ENCODE measurements at regions of chr2 and their contacts with region 1.

Region 1: DNA sequence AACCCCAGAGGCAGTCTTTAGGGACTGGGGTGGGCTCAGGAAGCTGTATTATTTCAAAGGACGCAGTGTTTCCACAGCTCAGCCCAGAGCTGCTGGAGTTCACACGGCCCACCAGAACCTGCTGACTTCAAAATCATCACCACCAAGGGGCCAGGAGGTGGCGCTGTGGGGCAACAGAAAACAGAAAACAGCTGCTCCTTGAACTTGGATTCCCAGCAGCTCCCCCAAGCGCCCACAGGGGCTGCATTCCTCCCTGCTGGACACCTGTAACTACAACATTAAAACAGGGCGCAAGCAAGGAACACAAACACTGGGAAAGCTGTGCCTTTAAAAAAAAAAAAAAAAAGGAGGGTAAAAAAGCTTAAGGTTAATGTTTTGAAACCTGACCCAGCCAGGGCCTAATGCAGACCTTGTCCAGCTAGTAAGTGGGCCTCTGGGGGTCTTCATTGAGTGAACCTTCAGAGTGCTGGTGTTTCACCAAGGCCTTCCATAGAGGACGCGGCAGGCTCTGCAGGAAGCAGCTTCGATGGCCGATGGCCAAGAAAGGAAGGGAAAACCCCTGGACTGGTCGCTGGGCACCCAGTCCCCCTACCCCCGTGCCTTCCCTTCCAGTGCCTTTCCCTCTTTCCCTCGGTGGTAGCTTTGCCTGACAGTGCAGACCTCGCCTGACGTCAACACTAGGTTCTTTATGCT is 25.9 kb downstream of the MLPH start:
- DNase-seq: peak; percentile 85 to 89 (median 86)
- ATAC-seq: peak; percentile 38 to 73 (median 69)
- H3K4me3 ChIP-seq: no peak overlapping the region
- H3K27ac ChIP-seq: peak overlapping the region in 11 of 12 donors; percentile 60 to 96 (median 81)
- H3K4me1 ChIP-seq: peaks cover 0 to 60% (median 39%) of the 10 kb centered on the region in 12 donors
- H3K27me3 ChIP-seq: no peaks in the 10 kb centered on the region
- CTCF ChIP-seq: peak; percentile 76 to 94 (median 92)
- POLR2A ChIP-seq: no peak

Region 2: DNA sequence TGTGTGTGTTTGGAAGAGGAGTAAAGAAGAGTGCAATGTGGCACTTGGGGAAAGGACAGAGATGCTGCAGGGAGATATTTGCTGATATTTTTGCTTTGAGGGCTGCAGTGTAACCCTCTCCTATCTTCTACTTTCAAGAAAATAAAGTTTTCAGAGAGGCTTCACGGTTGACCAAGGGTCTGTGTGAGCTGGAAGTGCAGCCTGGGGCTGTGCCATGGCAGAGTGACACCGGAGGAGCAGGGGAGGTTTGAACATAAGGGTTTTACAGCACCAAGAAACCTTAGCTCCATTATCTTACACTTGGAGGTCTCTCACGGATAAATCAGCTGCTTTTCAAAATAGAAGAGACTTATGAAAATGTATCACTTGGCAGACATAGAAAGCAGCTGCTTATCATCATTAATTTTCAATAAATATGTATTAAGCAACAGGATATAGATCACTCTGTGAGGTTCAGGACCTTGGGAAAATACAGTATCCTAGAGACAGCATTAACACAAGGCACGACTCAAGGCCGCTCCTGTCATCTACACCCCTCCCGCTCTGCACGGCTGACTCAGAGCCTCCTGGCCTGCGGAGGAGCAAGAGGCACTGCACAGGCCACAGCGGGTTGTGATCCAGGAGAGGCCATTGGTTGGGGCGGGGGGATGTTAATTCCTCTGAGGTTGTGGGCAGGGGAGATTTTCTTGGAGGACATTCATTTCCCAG is 299.5 kb before region 1 on chr2:
- intact Hi-C with region 1: no loop called
- DNase-seq: peak in 3 of 5 donors; percentile 56 to 77 (median 71)
- ATAC-seq: peak in 3 of 4 donors; percentile 75 to 85 (median 80)
- H3K4me3 ChIP-seq: no peak overlapping the region
- H3K27ac ChIP-seq: peak overlapping the region in 7 of 12 donors; percentile 21 to 70 (median 49)
- H3K4me1 ChIP-seq: peaks cover 0 to 36% (median 10%) of the 10 kb centered on the region in 12 donors
- H3K27me3 ChIP-seq: peaks cover 0 to 3% (median 0%) of the 10 kb centered on the region in 9 donors
- CTCF ChIP-seq: no peak
- POLR2A ChIP-seq: no peak

Region 3: GRCh38 chr2:237456200-237456843 is 56.6 kb before region 1 on chr2:
- intact Hi-C with region 1: no loop called
- DNase-seq: peak; percentile 73 to 88 (median 83)
- ATAC-seq: peak; percentile 85 to 94 (median 92)
- H3K4me3 ChIP-seq: no peak overlapping the region
- H3K27ac ChIP-seq: peak overlapping the region in 8 of 12 donors; percentile 22 to 68 (median 50)
- H3K4me1 ChIP-seq: peaks cover 0 to 31% (median 11%) of the 10 kb centered on the region in 12 donors
- H3K27me3 ChIP-seq: peaks cover 0 to 3% (median 0%) of the 10 kb centered on the region in 9 donors
- CTCF ChIP-seq: no peak
- POLR2A ChIP-seq: no peak

Region 4: DNA sequence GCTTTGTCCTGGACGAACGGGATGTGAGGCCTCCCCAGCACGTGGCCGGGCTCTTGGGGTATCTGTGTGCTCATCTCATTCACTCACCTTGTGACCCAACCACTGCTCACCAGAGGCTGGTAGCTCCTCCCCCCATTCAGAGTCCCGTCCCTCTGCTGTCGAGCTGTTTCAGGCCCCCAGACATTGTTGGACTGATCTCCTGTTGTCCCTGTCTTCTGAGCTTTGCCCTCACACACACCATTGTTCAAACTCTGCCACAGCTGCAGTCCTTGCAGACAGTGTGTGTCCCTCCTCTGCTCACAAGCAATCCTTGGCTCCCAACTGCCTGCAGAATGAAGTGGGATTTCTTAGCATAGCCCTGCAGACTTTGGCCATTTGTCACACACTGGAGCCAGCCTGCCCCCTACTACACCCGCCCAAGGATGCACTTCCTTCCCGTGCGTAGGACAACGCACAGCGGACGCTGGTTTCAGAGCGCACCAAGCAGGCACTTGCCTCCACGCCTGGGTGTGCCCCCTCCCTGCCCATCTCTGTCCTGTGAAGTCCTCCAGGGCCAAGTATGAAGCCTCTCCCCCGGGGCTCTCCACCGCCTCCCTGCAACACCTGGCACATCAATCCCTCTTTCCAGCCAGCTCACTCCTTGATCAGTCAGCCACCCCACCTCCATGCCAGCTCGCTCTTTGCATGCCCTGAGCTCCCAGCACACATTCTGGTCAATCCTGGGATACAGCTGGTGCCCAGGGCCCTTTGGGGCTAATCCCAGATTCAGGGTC is 36.9 kb after region 1 on chr2:
- intact Hi-C with region 1: loop called in 1 of 10 experiments (anchors 5 kb)
- DNase-seq: no peak
- ATAC-seq: no peak
- H3K4me3 ChIP-seq: no peak overlapping the region
- H3K27ac ChIP-seq: no peak overlapping the region
- H3K4me1 ChIP-seq: peaks cover 0 to 5% (median 0%) of the 10 kb centered on the region in 12 donors
- H3K27me3 ChIP-seq: no peaks in the 10 kb centered on the region
- CTCF ChIP-seq: no peak
- POLR2A ChIP-seq: no peak

Region 5: DNA sequence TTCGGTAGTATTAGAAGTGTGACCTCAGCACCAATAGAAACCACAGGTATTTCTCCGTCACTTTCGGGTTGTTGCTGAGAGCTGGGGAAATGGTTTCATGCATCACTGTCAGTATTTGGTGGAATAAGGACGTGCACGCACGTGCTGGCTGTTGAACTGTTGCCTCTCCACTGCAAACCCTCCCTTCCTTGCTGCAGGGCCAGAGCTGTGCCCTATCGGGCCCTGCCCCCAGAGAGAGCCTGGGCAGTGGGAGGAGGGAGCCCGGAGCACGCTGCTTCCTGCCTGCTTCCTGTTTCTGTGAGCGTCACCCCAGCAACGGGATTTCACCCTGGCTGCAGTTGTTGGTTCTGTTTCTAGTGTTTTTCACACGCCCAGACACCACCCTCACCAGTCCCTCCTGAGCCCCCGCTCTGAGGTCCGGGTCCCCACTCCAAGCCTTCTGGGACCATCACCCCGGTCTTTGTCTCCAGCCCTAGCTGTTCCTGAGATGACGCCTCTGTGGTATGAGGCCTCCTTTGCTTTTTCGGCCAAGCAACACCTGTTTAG is 161.9 kb after region 1 on chr2:
- intact Hi-C with region 1: loop called in 2 of 10 experiments (anchors 5 to 10 kb)
- DNase-seq: peak; percentile 89 to 92 (median 91)
- ATAC-seq: peak; percentile 79 to 90 (median 84)
- H3K4me3 ChIP-seq: peak overlapping the region in 9 of 12 donors; percentile 4 to 44 (median 24)
- H3K27ac ChIP-seq: peak overlapping the region; percentile 24 to 90 (median 78)
- H3K4me1 ChIP-seq: peaks cover 28 to 91% (median 77%) of the 10 kb centered on the region in 12 donors
- H3K27me3 ChIP-seq: no peaks in the 10 kb centered on the region
- CTCF ChIP-seq: peak in 6 of 12 donors; percentile 6 to 21 (median 10)
- POLR2A ChIP-seq: peak in 1 of 2 donors; percentile 39

Region 6: GRCh38 chr2:237744613-237745249 is 231.8 kb after region 1 on chr2:
- intact Hi-C with region 1: loop called in 5 of 10 experiments (anchors 2 to 10 kb)
- DNase-seq: peak; percentile 71 to 90 (median 76)
- ATAC-seq: peak; percentile 79 to 86 (median 82)
- H3K4me3 ChIP-seq: no peak overlapping the region
- H3K27ac ChIP-seq: peak overlapping the region in 7 of 12 donors; percentile 17 to 56 (median 23)
- H3K4me1 ChIP-seq: peaks cover 0 to 57% (median 46%) of the 10 kb centered on the region in 12 donors
- H3K27me3 ChIP-seq: no peaks in the 10 kb centered on the region
- CTCF ChIP-seq: peak; percentile 98 to 100 (median 99)
- POLR2A ChIP-seq: no peak